Naive thymus-derived CD4-positive, alpha-beta T cell (primary cell): ENCODE measurements at regions of chr19 and their contacts with region 1.

Region 1: GRCh38 chr19:35748106-35749020 is at the start of gene LIN37:
- DNase-seq: peak; percentile 91 to 100 (median 99)
- ATAC-seq: peak; percentile 83
- H3K4me3 ChIP-seq: peak within 1 kb of the TSS; percentile 95
- H3K4me3 Mint-ChIP-seq: peak within 1 kb of the TSS; percentile 90 to 100 (median 98)
- H3K27ac ChIP-seq: peak within 1 kb of the TSS; percentile 85
- H3K27ac Mint-ChIP-seq: peak within 1 kb of the TSS; percentile 89 to 97 (median 95)
- H3K4me1 ChIP-seq: peaks cover 28 to 30% of the 10 kb centered on the region in 2 donors
- H3K4me1 Mint-ChIP-seq: peaks cover 14 to 56% (median 43%) of the 10 kb centered on the region in 7 donors
- H3K27me3 ChIP-seq: no peaks in the 10 kb centered on the region
- H3K27me3 Mint-ChIP-seq: peaks cover 0 to 2% (median 0%) of the 10 kb centered on the region in 5 donors
- total RNA-seq, gene LIN37: 7.9 to 33.1 (median 18.9) TPM

Region 2: GRCh38 chr19:34733826-34734600 is 1014.4 kb before region 1 on chr19 and contains the start of gene ZNF181:
- CTCF ChIA-PET with region 1: no interaction called
- POLR2A ChIA-PET with region 1: no interaction called
- intact Hi-C with region 1: loop called in 1 of 2 experiments (anchors 2 kb)
- DNase-seq: peak; percentile 58 to 84 (median 82)
- ATAC-seq: peak; percentile 89
- H3K4me3 ChIP-seq: peak within 1 kb of the TSS; percentile 79
- H3K4me3 Mint-ChIP-seq: peak within 1 kb of the TSS; percentile 86 to 99 (median 98)
- H3K27ac ChIP-seq: peak within 1 kb of the TSS; percentile 94
- H3K27ac Mint-ChIP-seq: peak within 1 kb of the TSS; percentile 90 to 99 (median 98)
- H3K4me1 ChIP-seq: peaks cover 11 to 17% of the 10 kb centered on the region in 2 donors
- H3K4me1 Mint-ChIP-seq: peaks cover 18 to 39% (median 28%) of the 10 kb centered on the region in 7 donors
- H3K27me3 ChIP-seq: no peaks in the 10 kb centered on the region
- H3K27me3 Mint-ChIP-seq: peaks cover 0 to 4% (median 0%) of the 10 kb centered on the region in 5 donors
- total RNA-seq, gene ZNF181: 4.8 to 28.5 (median 8.4) TPM

Region 3: GRCh38 chr19:35408284-35409171 is 339.8 kb before region 1 on chr19:
- CTCF ChIA-PET with region 1: no interaction called
- POLR2A ChIA-PET with region 1: no interaction called
- intact Hi-C with region 1: no loop called
- DNase-seq: no peak
- ATAC-seq: no peak
- H3K4me3 ChIP-seq: no peak overlapping the region
- H3K4me3 Mint-ChIP-seq: no peak overlapping the region
- H3K27ac ChIP-seq: no peak overlapping the region
- H3K27ac Mint-ChIP-seq: no peak overlapping the region
- H3K4me1 ChIP-seq: no peaks in the 10 kb centered on the region
- H3K4me1 Mint-ChIP-seq: peaks cover 0 to 3% (median 0%) of the 10 kb centered on the region in 7 donors
- H3K27me3 ChIP-seq: peaks cover 0 to 2% of the 10 kb centered on the region in 2 donors
- H3K27me3 Mint-ChIP-seq: peaks cover 0 to 32% (median 4%) of the 10 kb centered on the region in 5 donors

Region 4: DNA sequence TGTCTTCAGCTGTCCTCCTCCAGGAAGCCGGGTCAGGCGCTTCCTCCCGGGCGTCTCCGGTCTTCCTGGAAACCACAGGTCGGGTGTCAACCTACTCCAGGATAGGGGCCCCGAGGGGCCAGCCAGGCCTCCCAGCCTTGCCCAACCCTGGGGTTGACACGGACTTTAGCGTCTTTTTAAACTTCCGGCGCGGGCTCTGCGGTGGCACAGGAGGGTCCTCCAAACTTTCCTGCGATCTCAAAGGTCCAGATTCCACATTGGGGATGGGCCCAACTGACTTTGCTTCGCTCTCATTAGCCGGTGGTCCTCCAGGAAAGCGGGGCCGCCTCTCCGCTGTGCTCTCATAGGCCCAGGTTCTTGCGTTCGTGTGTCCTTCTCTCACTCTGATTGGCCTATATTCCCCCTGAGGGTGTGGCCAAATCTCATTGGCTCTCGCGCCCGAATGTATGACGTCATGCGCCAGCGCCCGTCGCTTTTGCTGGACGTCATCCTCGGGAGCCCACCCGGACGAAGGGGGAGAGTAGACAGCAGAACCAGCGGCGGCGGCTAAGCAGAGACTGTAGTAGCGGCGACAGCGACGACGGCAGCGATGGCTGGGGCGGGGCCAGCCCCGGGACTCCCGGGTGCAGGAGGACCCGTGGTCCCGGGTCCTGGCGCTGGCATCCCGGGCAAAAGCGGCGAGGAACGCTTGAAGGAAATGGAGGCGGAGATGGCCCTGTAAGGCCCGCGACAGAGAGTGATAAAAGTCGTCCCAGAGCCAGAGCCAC is 119.6 kb before region 1 on chr19 and contains the start of gene RBM42:
- CTCF ChIA-PET with region 1: no interaction called
- POLR2A ChIA-PET with region 1: interaction called, 5 read pairs
- intact Hi-C with region 1: loop called in 1 of 2 experiments (anchors 1 kb)
- DNase-seq: peak; percentile 87 to 98 (median 97)
- ATAC-seq: peak; percentile 100
- H3K4me3 ChIP-seq: peak within 1 kb of the TSS; percentile 89
- H3K4me3 Mint-ChIP-seq: peak within 1 kb of the TSS; percentile 91 to 100 (median 98)
- H3K27ac ChIP-seq: peak within 1 kb of the TSS; percentile 89
- H3K27ac Mint-ChIP-seq: peak within 1 kb of the TSS; percentile 92 to 100 (median 99)
- H3K4me1 ChIP-seq: peaks cover 6 to 15% of the 10 kb centered on the region in 2 donors
- H3K4me1 Mint-ChIP-seq: peaks cover 12 to 35% (median 25%) of the 10 kb centered on the region in 7 donors
- H3K27me3 ChIP-seq: no peaks in the 10 kb centered on the region
- H3K27me3 Mint-ChIP-seq: no peaks in the 10 kb centered on the region
- total RNA-seq, gene RBM42: 39.0 to 98.2 (median 51.3) TPM

Region 5: GRCh38 chr19:35693830-35694599 is 54.3 kb before region 1 on chr19:
- CTCF ChIA-PET with region 1: interaction called, 3 read pairs
- POLR2A ChIA-PET with region 1: no interaction called
- intact Hi-C with region 1: loop called in 1 of 2 experiments (anchors 2 kb)
- DNase-seq: peak; percentile 75 to 93 (median 86)
- ATAC-seq: peak; percentile 100
- H3K4me3 ChIP-seq: no peak overlapping the region
- H3K4me3 Mint-ChIP-seq: no peak overlapping the region
- H3K27ac ChIP-seq: no peak overlapping the region
- H3K27ac Mint-ChIP-seq: peak overlapping the region in 4 of 9 donors; percentile 6 to 62 (median 40)
- H3K4me1 ChIP-seq: no peaks in the 10 kb centered on the region
- H3K4me1 Mint-ChIP-seq: peaks cover 0 to 27% (median 0%) of the 10 kb centered on the region in 7 donors
- H3K27me3 ChIP-seq: no peaks in the 10 kb centered on the region
- H3K27me3 Mint-ChIP-seq: no peaks in the 10 kb centered on the region

Region 6: GRCh38 chr19:35775298-35776110 is 27.1 kb after region 1 on chr19 and contains the start of gene ARHGAP33:
- CTCF ChIA-PET with region 1: no interaction called
- POLR2A ChIA-PET with region 1: interaction called, 3 read pairs
- intact Hi-C with region 1: loop called (anchors 1 kb)
- DNase-seq: peak; percentile 96 to 99 (median 98)
- ATAC-seq: peak; percentile 100
- H3K4me3 ChIP-seq: peak within 1 kb of the TSS; percentile 56
- H3K4me3 Mint-ChIP-seq: peak within 1 kb of the TSS; percentile 77 to 94 (median 86)
- H3K27ac ChIP-seq: peak within 1 kb of the TSS; percentile 61
- H3K27ac Mint-ChIP-seq: peak within 1 kb of the TSS in 7 of 9 donors; percentile 12 to 88 (median 84)
- H3K4me1 ChIP-seq: peaks cover 0 to 6% of the 10 kb centered on the region in 2 donors
- H3K4me1 Mint-ChIP-seq: peaks cover 11 to 28% (median 18%) of the 10 kb centered on the region in 7 donors
- H3K27me3 ChIP-seq: no peaks in the 10 kb centered on the region
- H3K27me3 Mint-ChIP-seq: no peaks in the 10 kb centered on the region
- total RNA-seq, gene ARHGAP33: 15.3 to 55.5 (median 23.4) TPM

Region 7: GRCh38 chr19:36014029-36014924 is 265.9 kb after region 1 on chr19 and contains the start of gene ALKBH6:
- CTCF ChIA-PET with region 1: no interaction called
- POLR2A ChIA-PET with region 1: no interaction called
- intact Hi-C with region 1: loop called in 1 of 2 experiments (anchors 1 kb)
- DNase-seq: peak; percentile 94 to 98 (median 97)
- ATAC-seq: peak; percentile 100
- H3K4me3 ChIP-seq: peak within 1 kb of the TSS; percentile 93
- H3K4me3 Mint-ChIP-seq: peak within 1 kb of the TSS; percentile 92 to 99 (median 95)
- H3K27ac ChIP-seq: peak within 1 kb of the TSS; percentile 86
- H3K27ac Mint-ChIP-seq: peak within 1 kb of the TSS; percentile 88 to 99 (median 94)
- H3K4me1 ChIP-seq: peaks cover 12 to 18% of the 10 kb centered on the region in 2 donors
- H3K4me1 Mint-ChIP-seq: peaks cover 36 to 53% (median 46%) of the 10 kb centered on the region in 7 donors
- H3K27me3 ChIP-seq: no peaks in the 10 kb centered on the region
- H3K27me3 Mint-ChIP-seq: no peaks in the 10 kb centered on the region
- total RNA-seq, gene ALKBH6: 32.6 to 60.6 (median 49.3) TPM